ENCODE measurements at regions of chr3 and their contacts with region 1.

Region 1: DNA sequence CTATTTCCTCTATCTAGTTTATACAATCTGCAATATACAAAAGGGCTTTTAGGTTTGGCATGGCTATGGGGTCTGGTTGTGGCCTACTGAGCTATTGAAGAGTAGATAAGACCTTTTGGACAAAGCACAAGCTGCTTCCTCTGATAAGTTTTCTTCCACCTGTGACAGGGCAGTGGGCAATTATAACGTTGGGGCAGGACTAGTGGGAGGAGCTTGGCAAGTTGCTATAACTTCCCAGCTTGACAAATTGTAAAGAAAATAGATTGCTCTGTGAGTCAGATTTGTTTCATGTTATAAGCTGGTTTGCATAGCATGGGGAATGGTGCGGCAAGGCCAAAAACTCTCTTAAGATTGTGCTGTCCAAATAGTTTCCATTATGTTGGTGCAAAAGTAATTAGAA is 64.9 kb downstream of the SLC7A14 start:
- DNase-seq: no peak
- H3K4me3 ChIP-seq: no peak overlapping the region
- H3K27ac ChIP-seq: no peak overlapping the region
- H3K4me1 ChIP-seq: 0 out of 2 replicates have a peak, but pooled peaks cover 15% of the 10 kb centered on the region
- H3K27me3 ChIP-seq: no peaks in the 10 kb centered on the region
- CTCF ChIP-seq: no peak

Region 2: GRCh38 chr3:169489775-169490546 is 1031.0 kb before region 1 on chr3:
- CTCF ChIA-PET with region 1: no interaction called
- POLR2A ChIA-PET with region 1: no interaction called
- intact Hi-C with region 1: no loop called
- DNase-seq: no peak
- H3K4me3 ChIP-seq: no peak overlapping the region
- H3K27ac ChIP-seq: no peak overlapping the region
- H3K4me1 ChIP-seq: no peaks in the 10 kb centered on the region
- H3K27me3 ChIP-seq: no peaks in the 10 kb centered on the region
- CTCF ChIP-seq: no peak

Region 3: GRCh38 chr3:170397579-170398177 is 123.3 kb before region 1 on chr3:
- CTCF ChIA-PET with region 1: no interaction called
- POLR2A ChIA-PET with region 1: interaction called, 10 read pairs
- intact Hi-C with region 1: no loop called
- DNase-seq: no peak
- H3K4me3 ChIP-seq: no peak overlapping the region
- H3K27ac ChIP-seq: no peak overlapping the region
- H3K4me1 ChIP-seq: no peaks in the 10 kb centered on the region
- H3K27me3 ChIP-seq: no peaks in the 10 kb centered on the region
- CTCF ChIP-seq: no peak